BJ (cell line): ENCODE measurements at regions of chr12 and their contacts with region 1.

Region 1: DNA sequence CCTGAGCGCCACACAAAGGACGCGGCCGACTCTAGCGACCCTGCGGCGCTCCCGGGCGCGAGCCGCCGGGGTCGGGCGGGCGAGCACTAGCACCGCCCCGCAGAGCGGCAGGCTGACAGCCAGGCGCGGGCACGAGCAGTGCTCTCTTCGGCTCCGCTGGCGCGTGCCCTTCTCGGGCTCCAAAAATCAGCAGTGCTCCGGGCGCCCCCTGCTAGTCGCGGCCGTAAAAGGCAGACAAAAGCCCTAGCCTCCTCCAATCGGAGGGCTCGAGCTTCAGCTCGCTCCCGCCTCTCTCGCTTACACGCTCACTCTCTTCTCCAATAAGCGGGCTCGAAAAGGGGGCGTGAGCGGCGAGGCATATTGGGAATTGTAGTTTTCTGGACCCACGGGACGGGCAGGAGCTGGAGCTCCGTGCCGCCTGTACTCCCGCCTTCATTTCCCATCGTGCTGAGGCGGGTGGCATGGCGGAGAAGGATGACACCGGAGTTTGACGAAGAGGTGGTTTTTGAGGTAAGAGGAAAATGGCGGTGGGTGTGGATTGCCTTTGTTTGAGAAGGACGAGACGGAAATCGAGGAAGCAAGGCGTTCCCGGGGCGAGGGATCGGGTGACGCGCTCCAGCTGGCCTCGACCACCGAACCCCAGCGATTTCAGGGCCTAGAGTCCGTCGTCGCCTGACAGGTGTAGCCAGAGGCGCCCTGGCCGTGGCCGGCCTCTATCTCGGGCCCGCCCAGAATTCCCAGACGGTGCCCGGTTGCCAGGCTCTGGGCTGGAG is at the starts of genes FGD6 and VEZT:
- DNase-seq: peak; percentile 98
- H3K4me3 ChIP-seq: peak within 1 kb of the TSS; percentile 81
- H3K27me3 ChIP-seq: no peaks in the 10 kb centered on the region
- CTCF ChIP-seq: peak; percentile 65
- polyA plus RNA-seq, gene FGD6: 2.1 and 4.4 TPM in 2 replicates
- polyA plus RNA-seq, gene VEZT: 50.6 and 97.2 TPM in 2 replicates

Region 2: GRCh38 chr12:95117178-95117599 is 100.4 kb before region 1 on chr12:
- CTCF ChIA-PET with region 1: interaction called, 34 read pairs
- POLR2A ChIA-PET with region 1: no interaction called
- DNase-seq: no peak
- H3K4me3 ChIP-seq: no peak overlapping the region
- H3K27me3 ChIP-seq: no peaks in the 10 kb centered on the region
- CTCF ChIP-seq: peak; percentile 55

Region 3: GRCh38 chr12:95277139-95277538 is 59.6 kb after region 1 on chr12:
- CTCF ChIA-PET with region 1: no interaction called
- POLR2A ChIA-PET with region 1: interaction called, 10 read pairs
- DNase-seq: peak; percentile 74
- H3K4me3 ChIP-seq: no peak overlapping the region
- H3K27me3 ChIP-seq: no peaks in the 10 kb centered on the region
- CTCF ChIP-seq: no peak

Region 4: DNA sequence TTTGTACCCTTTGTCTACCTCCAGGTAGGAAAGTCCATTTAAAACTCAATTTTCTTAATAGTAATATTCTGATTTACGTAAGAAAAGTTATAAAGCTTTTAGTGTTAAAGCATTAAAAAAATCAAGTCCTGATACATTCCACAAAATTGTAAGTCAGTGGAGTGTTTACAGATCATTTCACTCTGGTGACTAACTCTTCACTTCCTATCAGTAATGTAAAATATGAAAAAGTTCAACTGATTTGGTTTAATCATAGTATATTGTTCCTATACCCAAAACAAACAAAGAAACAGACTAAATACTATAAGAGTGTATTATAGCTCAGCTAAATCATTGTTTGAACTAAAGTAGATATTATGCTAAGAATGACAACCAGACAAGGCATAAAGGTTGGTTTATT is 85.9 kb after region 1 on chr12:
- CTCF ChIA-PET with region 1: no interaction called
- POLR2A ChIA-PET with region 1: no interaction called
- DNase-seq: no peak
- H3K4me3 ChIP-seq: no peak overlapping the region
- H3K27me3 ChIP-seq: no peaks in the 10 kb centered on the region
- CTCF ChIP-seq: no peak

Region 5: GRCh38 chr12:95336390-95337067 is 119.0 kb after region 1 on chr12:
- CTCF ChIA-PET with region 1: interaction called, 11 read pairs
- POLR2A ChIA-PET with region 1: no interaction called
- DNase-seq: peak; percentile 41
- H3K4me3 ChIP-seq: no peak overlapping the region
- H3K27me3 ChIP-seq: no peaks in the 10 kb centered on the region
- CTCF ChIP-seq: peak; percentile 90